ENCODE measurements at regions of chr19 and their contacts with region 1.

Region 1: DNA sequence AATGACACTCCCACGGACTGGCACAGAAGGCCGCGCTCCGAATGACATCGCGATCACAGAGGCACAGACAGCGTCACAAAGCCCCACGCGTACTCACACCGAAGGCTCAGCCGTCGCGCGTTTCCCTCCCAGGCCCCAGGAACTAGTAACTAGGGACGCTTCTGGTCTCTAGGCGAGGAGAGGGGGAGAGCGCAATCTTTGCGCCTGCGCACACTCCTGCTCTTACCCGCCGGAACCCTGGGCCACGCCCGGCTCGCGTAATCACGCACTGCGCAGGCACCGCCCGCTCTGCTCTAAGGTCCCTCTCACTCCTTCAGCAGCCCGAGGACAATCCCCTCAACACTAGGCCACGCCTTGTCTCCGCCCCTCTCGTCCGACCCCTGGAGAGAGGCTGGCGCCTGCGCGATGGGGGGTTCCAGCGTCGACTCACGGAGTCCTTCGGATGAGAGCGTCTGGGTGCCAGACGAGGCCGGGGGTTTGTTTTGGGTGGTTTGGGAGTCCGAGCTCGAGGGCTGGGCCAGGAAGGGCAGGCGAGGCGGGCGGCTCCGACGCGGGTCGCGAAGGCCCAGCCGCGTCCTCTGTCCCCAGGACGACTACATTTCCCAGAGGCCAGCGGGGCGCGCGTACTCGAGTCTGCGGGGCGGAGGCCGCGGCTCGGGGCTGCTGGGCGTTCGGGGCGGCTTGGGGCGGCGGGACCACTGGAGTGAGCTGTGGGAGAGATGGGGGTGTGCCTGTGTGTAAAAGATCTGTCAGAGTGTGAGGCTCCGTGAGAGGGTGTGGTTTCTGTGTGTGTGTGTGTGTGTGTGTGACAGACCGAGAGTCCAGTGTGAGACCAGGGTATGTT is at the start of gene ZNF471:
- DNase-seq: peak; percentile 94 to 96
- ATAC-seq: peak; percentile 100
- H3K4me3 ChIP-seq: peak within 1 kb of the TSS; percentile 68 to 86 (median 78)
- H3K27ac ChIP-seq: peak within 1 kb of the TSS; percentile 87 to 97 (median 94)
- H3K4me1 ChIP-seq: peaks cover 5 to 10% of the 10 kb centered on the region in 2 donors
- H3K27me3 ChIP-seq: no peaks in the 10 kb centered on the region
- CTCF ChIP-seq: no peak
- POLR2A ChIP-seq: no peak
- total RNA-seq, gene ZNF471: 0.56 to 3.8 (median 3.2) TPM

Region 2: GRCh38 chr19:56393119-56394012 is 114.3 kb before region 1 on chr19 and contains the start of gene ZNF582:
- in situ Hi-C with region 1: no loop called
- intact Hi-C with region 1: loop called (anchors 2 kb)
- DNase-seq: peak; percentile 81 to 87
- ATAC-seq: peak; percentile 95 to 96
- H3K4me3 ChIP-seq: peak within 1 kb of the TSS; percentile 68 to 83 (median 74)
- H3K27ac ChIP-seq: peak within 1 kb of the TSS; percentile 76 to 88 (median 85)
- H3K4me1 ChIP-seq: no peaks in the 10 kb centered on the region
- H3K27me3 ChIP-seq: no peaks in the 10 kb centered on the region
- CTCF ChIP-seq: peak in 4 of 5 experiments; percentile 17 to 71 (median 56)
- POLR2A ChIP-seq: peak in 1 of 2 donors; percentile 25
- total RNA-seq, gene ZNF582: 0.22 to 1.9 (median 0.83) TPM

Region 3: GRCh38 chr19:56538254-56538760 is 30.6 kb after region 1 on chr19:
- in situ Hi-C with region 1: no loop called
- intact Hi-C with region 1: loop called (anchors 1 kb)
- DNase-seq: peak; percentile 79 to 87
- ATAC-seq: peak; percentile 98 to 99
- H3K4me3 ChIP-seq: peak overlapping the region; percentile 82 to 99 (median 89)
- H3K27ac ChIP-seq: peak overlapping the region; percentile 87 to 97 (median 94)
- H3K4me1 ChIP-seq: peaks cover 7 to 13% of the 10 kb centered on the region in 2 donors
- H3K27me3 ChIP-seq: no peaks in the 10 kb centered on the region
- CTCF ChIP-seq: peak in 1 of 5 experiments; percentile 25
- POLR2A ChIP-seq: peak in 1 of 2 donors; percentile 34

Region 4: GRCh38 chr19:56594783-56595547 is 87.3 kb after region 1 on chr19 and contains the start of gene ZNF71:
- in situ Hi-C with region 1: no loop called
- intact Hi-C with region 1: loop called (anchors 10 kb)
- DNase-seq: peak; percentile 71 to 75
- ATAC-seq: peak; percentile 77 to 90
- H3K4me3 ChIP-seq: peak within 1 kb of the TSS; percentile 73 to 98 (median 84)
- H3K27ac ChIP-seq: peak within 1 kb of the TSS; percentile 76 to 82 (median 78)
- H3K4me1 ChIP-seq: peaks cover 12 to 18% of the 10 kb centered on the region in 2 donors
- H3K27me3 ChIP-seq: no peaks in the 10 kb centered on the region
- CTCF ChIP-seq: no peak
- POLR2A ChIP-seq: peak in 1 of 2 donors; percentile 28
- total RNA-seq, gene ZNF71: 6.7 to 7.5 (median 7.4) TPM

Measured in gastrocnemius medialis (tissue), 4 donors.